ENCODE measurements at regions of chr13 and their contacts with region 1.

Region 1: DNA sequence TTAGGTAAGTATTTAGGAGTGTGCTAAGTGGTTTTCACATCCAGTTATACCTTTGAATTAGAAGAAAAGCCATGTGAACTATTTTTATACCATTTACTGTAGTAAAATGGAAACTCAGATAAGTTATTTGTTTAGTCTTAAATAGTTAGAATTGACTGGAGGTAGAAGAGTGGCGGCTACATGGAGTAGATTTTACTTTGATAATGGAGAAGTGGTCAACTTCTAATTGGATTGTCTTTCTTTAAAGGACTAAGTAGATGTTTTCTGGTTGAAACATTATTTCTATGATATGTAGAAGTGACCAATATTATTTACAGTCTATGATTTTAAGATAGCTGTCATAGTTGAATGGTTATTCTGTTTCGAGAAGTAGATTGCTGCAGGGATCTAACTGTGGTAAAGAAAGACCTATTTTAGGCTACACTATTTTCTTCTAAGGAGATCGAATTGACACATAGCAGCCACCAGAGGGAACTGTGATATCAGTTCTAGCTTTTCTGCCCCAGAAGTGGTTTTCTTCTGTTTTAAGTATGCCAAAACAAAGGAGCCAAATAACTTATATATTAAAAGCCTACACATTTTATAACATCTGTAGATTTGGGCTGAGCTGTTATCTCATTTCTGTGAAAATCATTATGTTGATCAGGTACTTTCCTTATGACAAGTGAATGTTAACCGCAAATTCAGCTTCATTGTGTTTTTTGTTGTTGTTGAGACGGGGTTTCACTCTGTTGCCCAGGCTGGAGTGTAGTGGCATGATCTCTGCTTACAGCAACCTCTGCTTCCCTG is 26.1 kb downstream of the ZMYM2 start:
- DNase-seq: no peak
- ATAC-seq: peak; percentile 78
- H3K4me3 Mint-ChIP-seq: no peak overlapping the region
- H3K27ac Mint-ChIP-seq: peak overlapping the region; percentile 30
- H3K4me1 Mint-ChIP-seq: peaks cover 39% of the 10 kb centered on the region
- H3K27me3 Mint-ChIP-seq: no peaks in the 10 kb centered on the region
- CTCF ChIP-seq: peak; percentile 36

Region 2: GRCh38 chr13:19888799-19889198 is 95.8 kb before region 1 on chr13:
- CTCF ChIA-PET with region 1: no interaction called
- POLR2A ChIA-PET with region 1: no interaction called
- intact Hi-C with region 1: no loop called
- DNase-seq: no peak
- ATAC-seq: no peak
- H3K4me3 Mint-ChIP-seq: no peak overlapping the region
- H3K27ac Mint-ChIP-seq: no peak overlapping the region
- H3K4me1 Mint-ChIP-seq: no peaks in the 10 kb centered on the region
- H3K27me3 Mint-ChIP-seq: no peaks in the 10 kb centered on the region
- CTCF ChIP-seq: peak; percentile 30

Region 3: GRCh38 chr13:20002787-20003186 is 18.2 kb after region 1 on chr13:
- CTCF ChIA-PET with region 1: interaction called, 10 read pairs
- POLR2A ChIA-PET with region 1: interaction called, 3 read pairs
- intact Hi-C with region 1: no loop called
- DNase-seq: no peak
- ATAC-seq: no peak
- H3K4me3 Mint-ChIP-seq: no peak overlapping the region
- H3K27ac Mint-ChIP-seq: peak overlapping the region; percentile 8
- H3K4me1 Mint-ChIP-seq: peaks cover 33% of the 10 kb centered on the region
- H3K27me3 Mint-ChIP-seq: no peaks in the 10 kb centered on the region
- CTCF ChIP-seq: no peak

Region 4: GRCh38 chr13:20359335-20359734 is 374.7 kb after region 1 on chr13:
- CTCF ChIA-PET with region 1: no interaction called
- POLR2A ChIA-PET with region 1: no interaction called
- intact Hi-C with region 1: no loop called
- DNase-seq: no peak
- ATAC-seq: peak; percentile 91
- H3K4me3 Mint-ChIP-seq: no peak overlapping the region
- H3K27ac Mint-ChIP-seq: no peak overlapping the region
- H3K4me1 Mint-ChIP-seq: peaks cover 4% of the 10 kb centered on the region
- H3K27me3 Mint-ChIP-seq: no peaks in the 10 kb centered on the region
- CTCF ChIP-seq: no peak

Region 5: GRCh38 chr13:20728579-20729311 is 744.1 kb after region 1 on chr13:
- CTCF ChIA-PET with region 1: no interaction called
- POLR2A ChIA-PET with region 1: no interaction called
- intact Hi-C with region 1: no loop called
- DNase-seq: no peak
- ATAC-seq: no peak
- H3K4me3 Mint-ChIP-seq: no peak overlapping the region
- H3K27ac Mint-ChIP-seq: no peak overlapping the region
- H3K4me1 Mint-ChIP-seq: no peaks in the 10 kb centered on the region
- H3K27me3 Mint-ChIP-seq: no peaks in the 10 kb centered on the region
- CTCF ChIP-seq: no peak

Measured in activated CD8-positive, alpha-beta T cell treated with anti-CD3 and anti-CD28 coated beads for 36 hours (primary cell).